ENCODE measurements at regions of chr18 and their contacts with region 1.

Region 1: DNA sequence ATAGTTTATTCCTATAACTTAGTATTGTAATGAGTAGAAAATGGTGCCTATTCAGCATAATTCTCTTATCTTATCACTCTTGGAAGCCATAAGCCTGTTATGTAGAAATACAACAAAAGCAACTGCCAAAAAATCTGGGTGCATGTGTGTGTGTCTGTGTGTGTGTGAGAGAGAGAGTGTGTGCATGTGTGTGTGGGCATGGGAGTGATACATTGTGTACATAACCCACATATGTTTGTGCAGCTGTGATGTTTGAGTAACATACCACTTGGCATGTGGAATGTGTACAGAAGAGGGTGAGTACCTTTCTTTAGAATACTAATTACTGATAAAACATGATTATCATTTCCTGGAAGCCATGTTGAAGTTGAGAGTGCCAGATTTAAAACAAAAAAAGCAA is 642.3 kb upstream of the SYT4 start:
- DNase-seq: no peak
- H3K4me3 Mint-ChIP-seq: no peak overlapping the region
- H3K27ac Mint-ChIP-seq: no peak overlapping the region
- H3K4me1 Mint-ChIP-seq: no peaks in the 10 kb centered on the region
- H3K27me3 Mint-ChIP-seq: no peaks in the 10 kb centered on the region

Region 2: GRCh38 chr18:43869451-43870008 is 50.0 kb before region 1 on chr18:
- CTCF ChIA-PET with region 1: no interaction called
- intact Hi-C with region 1: loop called (anchors 10 kb)
- DNase-seq: no peak
- H3K4me3 Mint-ChIP-seq: no peak overlapping the region
- H3K27ac Mint-ChIP-seq: no peak overlapping the region
- H3K4me1 Mint-ChIP-seq: no peaks in the 10 kb centered on the region
- H3K27me3 Mint-ChIP-seq: no peaks in the 10 kb centered on the region

Region 3: GRCh38 chr18:44526705-44527415 is 607.3 kb after region 1 on chr18:
- CTCF ChIA-PET with region 1: no interaction called
- intact Hi-C with region 1: no loop called
- DNase-seq: no peak
- H3K4me3 Mint-ChIP-seq: no peak overlapping the region
- H3K27ac Mint-ChIP-seq: no peak overlapping the region
- H3K4me1 Mint-ChIP-seq: no peaks in the 10 kb centered on the region
- H3K27me3 Mint-ChIP-seq: no peaks in the 10 kb centered on the region

Measured in activated naive CD4-positive, alpha-beta T cell treated with anti-CD3 and anti-CD28 coated beads for 36 hours (primary cell).